Activated naive CD8-positive, alpha-beta T cell treated with anti-CD3 and anti-CD28 coated beads, Interleukin-2, amount 10 ng/mL, durations not matched to agents 7 days and 5 days (primary cell): ENCODE measurements at regions of chr7 and their contacts with region 1.

Region 1: DNA sequence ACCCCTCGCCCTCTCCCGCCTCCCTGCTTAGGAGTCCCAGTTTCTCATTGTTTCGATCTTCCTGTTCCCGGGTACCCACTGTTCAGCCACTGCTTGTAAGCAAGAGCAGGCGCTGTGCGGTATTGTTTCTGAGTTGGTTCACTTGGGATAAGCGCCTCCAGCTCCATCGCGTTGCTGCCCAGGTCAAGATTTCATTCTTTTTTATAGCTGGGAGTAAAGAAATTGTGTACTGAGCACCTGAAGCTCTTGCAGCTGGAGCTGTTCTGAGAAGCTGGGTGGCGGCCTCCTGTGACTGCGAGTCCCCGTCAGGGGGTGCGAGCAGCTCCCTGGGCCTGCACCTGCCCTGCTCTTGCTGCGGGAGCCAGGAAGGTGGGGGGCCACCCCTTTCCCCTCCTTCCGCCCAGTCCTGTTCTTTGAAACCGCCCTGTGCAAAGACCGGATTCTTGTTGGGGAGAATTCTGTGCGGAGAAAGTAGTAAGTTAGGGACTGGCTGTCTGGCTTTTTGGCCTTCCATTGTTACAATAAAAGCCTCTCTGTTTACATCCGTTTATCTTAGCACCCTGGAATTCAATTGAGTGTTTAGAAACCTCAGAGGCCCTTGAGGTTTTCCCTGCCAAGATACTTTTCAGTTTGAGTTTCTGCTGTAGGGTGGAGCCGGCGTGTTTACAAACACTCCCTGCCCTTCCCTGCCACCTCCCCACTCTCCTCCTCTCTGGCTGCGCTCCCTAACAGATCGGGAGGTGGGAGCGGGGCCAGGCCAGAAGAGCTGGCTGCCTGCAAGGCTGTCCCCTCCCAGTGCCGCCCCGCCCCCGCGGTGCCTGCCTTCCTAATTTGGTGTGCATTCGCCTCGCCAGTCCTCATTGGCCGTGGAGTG is 30.8 kb upstream of the AP5Z1 start:
- DNase-seq: peak; percentile 86
- ATAC-seq: peak; percentile 75
- H3K4me3 Mint-ChIP-seq: peak overlapping the region; percentile 85
- H3K27ac Mint-ChIP-seq: peak overlapping the region; percentile 92
- H3K4me1 Mint-ChIP-seq: peaks cover 30% of the 10 kb centered on the region
- H3K27me3 Mint-ChIP-seq: no peaks in the 10 kb centered on the region

Region 2: DNA sequence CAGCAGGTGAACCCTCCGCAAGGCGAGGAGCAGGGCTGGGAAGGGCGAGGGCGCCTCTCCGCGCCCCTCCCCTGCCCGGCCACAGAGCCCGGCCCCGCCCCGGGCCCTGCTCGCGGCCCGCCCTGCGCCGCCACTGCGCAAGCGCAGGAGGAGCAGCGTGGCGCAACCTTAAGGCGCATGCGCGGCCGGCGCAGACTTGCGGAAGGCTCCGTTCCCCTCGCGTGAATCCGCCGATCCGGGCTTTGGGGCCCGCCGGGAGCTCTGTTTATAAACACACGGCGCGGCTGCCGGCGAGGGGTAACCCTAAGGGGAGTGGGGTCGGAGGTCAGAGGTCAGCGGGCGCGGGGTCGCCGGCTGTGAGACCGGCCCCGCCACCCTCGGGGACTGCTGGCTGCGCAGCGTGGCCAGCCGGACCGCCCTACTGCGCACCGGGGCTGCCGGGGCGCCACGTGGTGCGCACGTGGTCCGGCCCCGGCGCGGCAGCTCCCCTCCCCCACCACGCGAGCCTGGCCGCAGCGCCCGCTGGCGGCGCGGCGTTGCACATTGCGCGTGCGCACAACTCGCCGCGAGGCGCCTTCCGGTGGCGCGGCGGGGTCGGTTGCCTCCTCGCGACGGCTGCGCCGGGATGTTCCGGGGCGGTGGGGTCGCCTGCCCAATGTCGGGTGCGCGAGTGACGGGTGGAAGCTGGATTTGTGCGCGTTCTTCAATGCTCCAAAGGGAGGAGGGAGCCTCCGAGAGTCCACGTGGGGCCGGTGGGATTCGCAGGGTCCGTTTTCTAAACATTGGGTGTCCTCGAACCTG is 102.8 kb before region 1 on chr7:
- POLR2A ChIA-PET with region 1: interaction called, 20 read pairs
- DNase-seq: peak; percentile 100
- ATAC-seq: peak; percentile 86
- H3K4me3 Mint-ChIP-seq: peak overlapping the region; percentile 91
- H3K27ac Mint-ChIP-seq: peak overlapping the region; percentile 95
- H3K4me1 Mint-ChIP-seq: peaks cover 14% of the 10 kb centered on the region
- H3K27me3 Mint-ChIP-seq: peaks cover 4% of the 10 kb centered on the region

Region 3: DNA sequence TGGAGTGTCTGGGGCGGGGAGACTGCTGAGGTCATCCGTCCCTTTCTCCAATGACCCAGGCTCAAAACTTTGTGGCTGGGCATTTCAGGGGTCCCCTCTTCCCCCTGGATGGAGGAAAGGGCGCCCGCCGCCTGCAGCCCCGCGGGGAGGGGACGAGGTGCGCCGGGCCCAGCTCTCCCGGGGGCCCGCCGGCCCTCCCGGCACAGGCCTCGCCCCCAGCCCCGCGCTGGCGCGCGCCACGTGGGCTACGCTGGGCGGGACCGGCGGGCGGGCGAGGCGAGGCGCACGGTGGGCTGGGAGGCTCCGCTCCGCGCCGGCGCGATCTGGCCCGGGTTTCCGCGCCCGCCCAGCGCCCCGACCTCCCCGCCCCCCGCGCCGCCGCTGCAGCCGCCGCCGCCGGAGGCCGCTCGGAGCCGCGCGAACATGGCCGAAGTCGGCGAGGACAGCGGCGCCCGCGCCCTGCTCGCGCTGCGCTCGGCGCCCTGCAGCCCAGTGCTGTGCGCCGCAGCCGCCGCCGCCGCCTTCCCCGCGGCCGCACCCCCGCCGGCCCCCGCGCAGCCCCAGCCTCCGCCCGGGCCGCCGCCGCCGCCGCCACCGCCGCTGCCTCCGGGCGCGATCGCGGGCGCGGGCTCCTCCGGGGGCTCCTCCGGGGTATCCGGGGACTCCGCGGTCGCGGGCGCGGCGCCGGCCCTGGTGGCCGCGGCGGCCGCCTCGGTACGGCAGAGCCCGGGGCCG is 62.6 kb before region 1 on chr7 and contains the start of gene FOXK1:
- POLR2A ChIA-PET with region 1: interaction called, 27 read pairs
- DNase-seq: peak; percentile 92
- ATAC-seq: peak; percentile 79
- H3K4me3 Mint-ChIP-seq: peak within 1 kb of the TSS; percentile 91
- H3K27ac Mint-ChIP-seq: peak within 1 kb of the TSS; percentile 94
- H3K4me1 Mint-ChIP-seq: peaks cover 18% of the 10 kb centered on the region
- H3K27me3 Mint-ChIP-seq: no peaks in the 10 kb centered on the region
- total RNA-seq, gene FOXK1: 41.7 to 42.1 TPM

Region 4: DNA sequence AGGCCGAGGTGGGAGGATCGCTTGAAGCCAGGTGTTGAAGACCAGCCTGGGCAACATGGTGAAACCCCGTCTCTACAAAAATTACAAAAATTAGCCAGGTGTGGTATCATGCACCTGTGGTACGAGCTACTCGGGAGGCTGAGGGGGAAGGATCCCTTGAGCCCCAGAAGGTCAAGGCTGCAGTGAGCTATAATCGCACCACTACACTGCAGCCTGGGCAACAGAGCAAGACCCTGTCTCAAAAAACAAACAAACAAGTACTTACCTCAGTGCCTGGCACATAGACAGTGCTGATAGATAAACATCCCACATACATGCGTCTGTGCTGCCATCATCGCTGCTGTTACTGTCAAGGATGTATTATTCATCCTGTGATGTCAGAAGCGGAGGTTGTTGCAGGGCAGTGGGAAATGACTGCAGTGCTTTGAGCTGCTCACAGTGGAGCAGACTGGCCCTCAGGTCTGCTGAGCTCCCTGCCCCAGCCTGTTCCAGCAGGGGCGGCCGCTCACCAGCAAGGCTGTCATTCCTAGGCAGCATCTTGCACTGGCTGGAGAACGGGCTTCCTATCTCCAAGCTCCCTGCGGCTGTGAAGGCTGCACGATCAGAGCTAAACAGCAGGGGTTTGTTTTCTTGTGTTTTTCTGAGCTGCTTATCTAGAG is 43.9 kb before region 1 on chr7:
- POLR2A ChIA-PET with region 1: no interaction called
- DNase-seq: no peak
- ATAC-seq: no peak
- H3K4me3 Mint-ChIP-seq: no peak overlapping the region
- H3K27ac Mint-ChIP-seq: no peak overlapping the region
- H3K4me1 Mint-ChIP-seq: peaks cover 7% of the 10 kb centered on the region
- H3K27me3 Mint-ChIP-seq: no peaks in the 10 kb centered on the region

Region 5: GRCh38 chr7:4725014-4725849 is 19.4 kb before region 1 on chr7:
- POLR2A ChIA-PET with region 1: interaction called, 38 read pairs
- DNase-seq: peak; percentile 72
- ATAC-seq: peak; percentile 81
- H3K4me3 Mint-ChIP-seq: peak overlapping the region; percentile 91
- H3K27ac Mint-ChIP-seq: peak overlapping the region; percentile 92
- H3K4me1 Mint-ChIP-seq: peaks cover 26% of the 10 kb centered on the region
- H3K27me3 Mint-ChIP-seq: no peaks in the 10 kb centered on the region

Region 6: DNA sequence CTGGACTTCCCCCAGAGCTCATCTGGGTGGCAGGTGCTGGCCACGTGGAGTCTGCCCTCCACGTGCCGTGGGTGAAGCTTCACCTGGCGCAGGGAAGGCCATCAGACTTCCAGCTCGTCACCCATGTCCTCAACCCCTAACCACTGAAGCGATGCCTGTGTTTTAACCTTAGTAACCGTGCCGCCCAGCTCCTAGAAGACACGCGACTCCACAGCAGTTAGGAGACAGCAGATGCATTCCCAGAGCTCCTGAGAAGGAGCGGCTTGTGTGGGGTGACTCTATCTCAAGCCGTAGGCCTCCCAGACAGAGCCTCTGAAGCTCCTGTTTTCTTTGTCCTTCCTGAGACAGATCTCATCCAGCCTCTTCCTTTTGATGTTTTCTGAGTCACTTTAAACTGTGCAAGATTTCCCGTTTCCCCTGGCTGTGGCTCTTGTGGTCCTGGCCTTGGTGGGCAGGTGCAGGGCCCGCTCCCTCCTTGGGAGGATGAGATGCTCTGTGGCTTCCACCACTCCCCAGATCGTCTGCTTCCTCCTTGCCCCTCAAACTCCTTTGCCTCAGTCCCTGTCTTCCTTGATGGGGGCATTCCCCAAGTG is 10.6 kb before region 1 on chr7:
- POLR2A ChIA-PET with region 1: interaction called, 43 read pairs
- DNase-seq: peak; percentile 65
- ATAC-seq: peak; percentile 69
- H3K4me3 Mint-ChIP-seq: peak overlapping the region; percentile 75
- H3K27ac Mint-ChIP-seq: peak overlapping the region; percentile 74
- H3K4me1 Mint-ChIP-seq: peaks cover 52% of the 10 kb centered on the region
- H3K27me3 Mint-ChIP-seq: no peaks in the 10 kb centered on the region

Region 7: GRCh38 chr7:4775250-4775847 is 30.7 kb after region 1 on chr7 and contains the start of gene AP5Z1:
- POLR2A ChIA-PET with region 1: interaction called, 32 read pairs
- DNase-seq: peak; percentile 95
- ATAC-seq: peak; percentile 91
- H3K4me3 Mint-ChIP-seq: peak within 1 kb of the TSS; percentile 99
- H3K27ac Mint-ChIP-seq: peak within 1 kb of the TSS; percentile 99
- H3K4me1 Mint-ChIP-seq: peaks cover 29% of the 10 kb centered on the region
- H3K27me3 Mint-ChIP-seq: no peaks in the 10 kb centered on the region
- total RNA-seq, gene AP5Z1: 70.1 to 74.6 TPM